OCI-LY7 (cell line): ENCODE measurements at regions of chr17 and their contacts with region 1.

Region 1: GRCh38 chr17:67824735-67825626 is at the start of gene BPTF:
- DNase-seq: peak; percentile 96
- H3K4me3 ChIP-seq: peak within 1 kb of the TSS; percentile 88
- H3K27ac ChIP-seq: peak within 1 kb of the TSS; percentile 89
- H3K4me1 ChIP-seq: peaks cover 68% of the 10 kb centered on the region
- CTCF ChIP-seq: peak; percentile 83
- total RNA-seq, gene BPTF: 86.1 and 104 TPM in 2 replicates

Region 2: GRCh38 chr17:67717624-67718329 is 107.2 kb before region 1 on chr17 and contains the start of gene NOL11:
- CTCF ChIA-PET with region 1: no interaction called
- POLR2A ChIA-PET with region 1: no interaction called
- intact Hi-C with region 1: loop called (anchors 2 kb)
- DNase-seq: peak; percentile 99
- H3K4me3 ChIP-seq: peak within 1 kb of the TSS; percentile 84
- H3K27ac ChIP-seq: peak within 1 kb of the TSS; percentile 78
- H3K4me1 ChIP-seq: peaks cover 27% of the 10 kb centered on the region
- CTCF ChIP-seq: peak; percentile 91
- total RNA-seq, gene NOL11: 49.4 and 65.5 TPM in 2 replicates

Region 3: DNA sequence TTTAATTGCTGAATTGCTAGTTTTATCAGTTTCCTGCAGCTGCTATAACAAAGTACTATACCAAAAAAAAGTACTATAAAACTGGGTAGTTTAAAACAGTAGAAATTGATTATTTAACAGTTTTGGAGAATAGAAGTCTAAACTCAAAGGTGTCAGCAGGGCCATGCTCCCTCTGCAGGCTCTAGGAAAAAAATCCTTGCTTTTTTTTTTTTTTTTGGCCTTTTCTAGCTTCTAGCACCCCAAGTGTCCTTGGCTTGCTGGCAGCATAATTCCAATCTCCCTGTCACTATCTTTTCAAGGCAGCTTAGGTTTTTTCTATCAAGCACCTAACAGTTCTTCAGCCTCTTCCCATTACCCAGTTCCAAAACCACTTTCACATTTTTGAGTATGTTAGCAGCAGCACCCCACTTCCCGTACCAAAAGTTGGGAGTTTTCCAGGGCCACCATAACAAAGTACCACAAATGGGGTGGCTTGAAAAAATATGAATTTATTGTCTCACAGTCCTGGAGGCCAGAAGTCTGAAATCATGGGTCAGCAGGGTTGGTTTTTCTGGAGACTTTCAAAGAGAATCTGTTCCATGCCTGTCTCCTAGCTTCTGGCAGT is 37.7 kb after region 1 on chr17:
- CTCF ChIA-PET with region 1: no interaction called
- POLR2A ChIA-PET with region 1: interaction called, 7 read pairs
- intact Hi-C with region 1: loop called (anchors 2 kb)
- DNase-seq: no peak
- H3K4me3 ChIP-seq: no peak overlapping the region
- H3K27ac ChIP-seq: no peak overlapping the region
- H3K4me1 ChIP-seq: peaks cover 29% of the 10 kb centered on the region
- CTCF ChIP-seq: 0 out of 2 replicates have a peak, but pooled peaks have one; percentile 34

Region 4: GRCh38 chr17:67931233-67931632 is 106.3 kb after region 1 on chr17:
- CTCF ChIA-PET with region 1: no interaction called
- POLR2A ChIA-PET with region 1: no interaction called
- intact Hi-C with region 1: no loop called
- DNase-seq: no peak
- H3K4me3 ChIP-seq: no peak overlapping the region
- H3K27ac ChIP-seq: no peak overlapping the region
- H3K4me1 ChIP-seq: no peaks in the 10 kb centered on the region
- CTCF ChIP-seq: no peak